BJ (cell line): ENCODE measurements at regions of chr13 and their contacts with region 1.

Region 1: GRCh38 chr13:48580185-48580803 is 47.4 kb upstream of the RCBTB2 start:
- DNase-seq: peak; percentile 19
- H3K4me3 ChIP-seq: no peak overlapping the region
- H3K27me3 ChIP-seq: peaks cover 4% of the 10 kb centered on the region
- CTCF ChIP-seq: peak; percentile 68

Region 2: GRCh38 chr13:48126944-48127830 is 453.1 kb before region 1 on chr13:
- CTCF ChIA-PET with region 1: interaction called, 22 read pairs
- POLR2A ChIA-PET with region 1: no interaction called
- DNase-seq: peak; percentile 14
- H3K4me3 ChIP-seq: no peak overlapping the region
- H3K27me3 ChIP-seq: no peaks in the 10 kb centered on the region
- CTCF ChIP-seq: peak; percentile 66

Region 3: GRCh38 chr13:48265217-48265815 is 315.0 kb before region 1 on chr13:
- CTCF ChIA-PET with region 1: no interaction called
- POLR2A ChIA-PET with region 1: no interaction called
- DNase-seq: no peak
- H3K4me3 ChIP-seq: no peak overlapping the region
- H3K27me3 ChIP-seq: no peaks in the 10 kb centered on the region
- CTCF ChIP-seq: no peak

Region 4: GRCh38 chr13:48334534-48335127 is 245.7 kb before region 1 on chr13:
- CTCF ChIA-PET with region 1: interaction called, 85 read pairs
- POLR2A ChIA-PET with region 1: no interaction called
- DNase-seq: peak; percentile 9
- H3K4me3 ChIP-seq: no peak overlapping the region
- H3K27me3 ChIP-seq: no peaks in the 10 kb centered on the region
- CTCF ChIP-seq: peak; percentile 29; the same call in 1 of the 2 replicates

Region 5: DNA sequence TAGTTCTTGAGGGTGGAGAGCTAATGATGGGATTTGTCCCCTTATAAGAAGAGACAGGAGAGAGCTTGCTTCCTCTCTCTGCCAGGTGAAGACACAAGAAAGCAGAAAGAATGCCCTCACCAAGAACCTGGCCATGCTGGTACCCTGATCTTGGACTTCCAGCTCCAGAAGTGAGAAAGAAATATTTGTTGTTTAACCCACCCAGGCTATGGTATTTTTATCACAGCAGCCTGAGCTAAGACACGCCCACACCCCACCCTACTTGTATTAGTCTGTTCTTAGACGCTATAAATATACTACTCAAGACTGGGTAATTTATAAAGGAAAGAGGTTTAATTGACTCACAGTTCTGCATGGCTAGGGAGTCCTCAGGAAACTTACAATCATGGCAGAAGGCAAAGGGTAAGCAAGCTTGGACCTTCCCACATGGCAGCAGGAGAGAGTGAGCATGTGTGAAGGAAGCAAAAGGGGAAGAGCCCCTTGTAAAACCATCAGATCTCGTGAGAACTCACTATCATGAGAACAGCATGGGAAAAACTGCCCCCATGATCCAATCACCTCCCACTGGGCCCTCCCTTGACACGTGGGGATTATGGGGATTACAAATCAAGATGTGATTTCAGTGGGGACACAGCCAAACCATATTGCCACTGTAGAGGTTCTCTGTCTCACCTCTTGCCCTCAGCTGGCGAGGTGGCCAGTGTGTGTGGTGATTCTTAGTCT is 10.0 kb after region 1 on chr13:
- CTCF ChIA-PET with region 1: interaction called, 11 read pairs
- POLR2A ChIA-PET with region 1: no interaction called
- DNase-seq: no peak
- H3K4me3 ChIP-seq: no peak overlapping the region
- H3K27me3 ChIP-seq: peaks cover 6% of the 10 kb centered on the region
- CTCF ChIP-seq: no peak

Region 6: GRCh38 chr13:48775804-48776203 is 195.5 kb after region 1 on chr13:
- CTCF ChIA-PET with region 1: no interaction called
- POLR2A ChIA-PET with region 1: no interaction called
- DNase-seq: peak; percentile 88
- H3K4me3 ChIP-seq: no peak overlapping the region
- H3K27me3 ChIP-seq: peaks cover 12% of the 10 kb centered on the region
- CTCF ChIP-seq: no peak